CD8-positive, alpha-beta T cell (primary cell): ENCODE measurements at regions of chr2 and their contacts with region 1.

Region 1: DNA sequence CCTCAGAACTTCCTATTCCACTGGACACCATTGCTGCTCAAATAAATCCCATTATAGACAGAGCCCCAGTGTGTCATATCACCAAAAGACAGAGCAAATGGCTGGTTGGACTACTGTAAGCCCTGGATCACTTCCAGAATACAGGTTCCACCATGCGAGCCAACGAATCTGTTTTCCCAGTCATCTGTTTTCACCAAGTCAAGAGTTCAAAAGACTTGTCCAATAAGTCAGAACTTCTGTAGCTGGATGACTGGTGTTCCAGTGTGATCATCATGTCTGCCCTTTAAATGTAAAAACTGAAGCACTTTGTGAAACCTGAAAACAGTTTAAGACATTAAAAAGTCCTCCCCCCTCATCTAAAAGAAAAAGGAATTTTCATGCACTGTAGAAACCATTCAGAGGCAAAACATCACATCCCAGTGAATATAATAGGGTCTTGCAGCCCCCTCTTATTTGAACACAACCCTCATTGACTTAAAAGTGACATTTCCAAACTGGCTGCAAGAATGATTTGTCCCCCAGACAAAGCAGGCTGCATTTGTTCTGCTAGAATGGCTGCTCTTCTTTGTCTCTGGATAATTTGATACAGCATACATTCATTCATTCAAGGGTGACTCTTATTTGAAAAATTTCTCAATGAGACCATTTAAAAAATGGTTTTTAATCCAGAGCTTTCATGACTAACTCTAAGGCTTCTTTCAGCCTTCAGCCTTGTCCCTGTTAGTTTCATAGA is 64.6 kb upstream of the TANC1 start:
- DNase-seq: no peak
- ATAC-seq: no peak
- H3K4me3 ChIP-seq: no peak overlapping the region
- H3K4me3 Mint-ChIP-seq: no peak overlapping the region
- H3K27ac ChIP-seq: no peak overlapping the region
- H3K27ac Mint-ChIP-seq: no peak overlapping the region
- H3K4me1 ChIP-seq: no peaks in the 10 kb centered on the region
- H3K4me1 Mint-ChIP-seq: no peaks in the 10 kb centered on the region
- H3K27me3 ChIP-seq: no peaks in the 10 kb centered on the region
- H3K27me3 Mint-ChIP-seq: no peaks in the 10 kb centered on the region
- CTCF ChIP-seq: no peak

Region 2: DNA sequence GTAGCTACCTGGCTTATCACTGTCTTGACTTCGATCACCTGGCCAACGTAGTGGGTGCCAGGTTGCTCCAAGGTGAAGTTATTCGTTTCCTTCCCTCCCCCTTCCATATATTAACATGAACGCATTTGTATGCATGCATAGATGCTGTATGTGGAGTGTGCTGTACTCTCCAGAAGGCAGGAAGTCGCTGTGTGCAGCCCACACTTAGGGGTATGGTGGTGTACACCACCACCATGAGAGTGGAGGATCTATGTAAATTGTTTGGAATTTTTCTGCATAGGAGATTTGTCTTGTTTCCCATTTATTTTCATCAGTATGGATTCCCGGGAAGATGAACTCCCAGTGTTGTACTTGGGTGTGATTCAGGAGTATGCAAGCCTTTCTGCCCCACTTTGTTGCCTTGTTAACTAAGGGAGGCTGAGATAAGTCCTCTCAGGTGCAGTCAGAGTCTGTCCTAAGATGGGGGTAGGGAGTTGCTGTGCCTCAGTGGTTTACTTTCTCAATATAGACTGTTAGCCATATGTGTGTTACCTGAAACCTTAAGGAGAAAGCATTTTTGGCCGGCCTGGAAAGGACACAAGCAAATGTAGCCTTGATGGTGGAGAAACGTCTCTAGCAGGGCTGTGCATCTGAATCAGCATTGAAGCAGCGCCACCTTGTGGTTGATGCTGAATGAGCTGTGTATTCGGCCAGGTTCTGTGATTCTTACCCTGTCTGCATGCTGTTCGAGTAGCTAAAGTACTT is 214.4 kb after region 1 on chr2:
- CTCF ChIA-PET with region 1: interaction called, 63 read pairs
- POLR2A ChIA-PET with region 1: interaction called, 3 read pairs
- intact Hi-C with region 1: loop called (anchors 1 kb)
- DNase-seq: peak; percentile 54 to 89 (median 79)
- ATAC-seq: peak; percentile 75
- H3K4me3 ChIP-seq: no peak overlapping the region
- H3K4me3 Mint-ChIP-seq: no peak overlapping the region
- H3K27ac ChIP-seq: no peak overlapping the region
- H3K27ac Mint-ChIP-seq: no peak overlapping the region
- H3K4me1 ChIP-seq: no peaks in the 10 kb centered on the region
- H3K4me1 Mint-ChIP-seq: peaks cover 12% of the 10 kb centered on the region
- H3K27me3 ChIP-seq: no peaks in the 10 kb centered on the region
- H3K27me3 Mint-ChIP-seq: no peaks in the 10 kb centered on the region
- CTCF ChIP-seq: peak; percentile 80

Region 3: DNA sequence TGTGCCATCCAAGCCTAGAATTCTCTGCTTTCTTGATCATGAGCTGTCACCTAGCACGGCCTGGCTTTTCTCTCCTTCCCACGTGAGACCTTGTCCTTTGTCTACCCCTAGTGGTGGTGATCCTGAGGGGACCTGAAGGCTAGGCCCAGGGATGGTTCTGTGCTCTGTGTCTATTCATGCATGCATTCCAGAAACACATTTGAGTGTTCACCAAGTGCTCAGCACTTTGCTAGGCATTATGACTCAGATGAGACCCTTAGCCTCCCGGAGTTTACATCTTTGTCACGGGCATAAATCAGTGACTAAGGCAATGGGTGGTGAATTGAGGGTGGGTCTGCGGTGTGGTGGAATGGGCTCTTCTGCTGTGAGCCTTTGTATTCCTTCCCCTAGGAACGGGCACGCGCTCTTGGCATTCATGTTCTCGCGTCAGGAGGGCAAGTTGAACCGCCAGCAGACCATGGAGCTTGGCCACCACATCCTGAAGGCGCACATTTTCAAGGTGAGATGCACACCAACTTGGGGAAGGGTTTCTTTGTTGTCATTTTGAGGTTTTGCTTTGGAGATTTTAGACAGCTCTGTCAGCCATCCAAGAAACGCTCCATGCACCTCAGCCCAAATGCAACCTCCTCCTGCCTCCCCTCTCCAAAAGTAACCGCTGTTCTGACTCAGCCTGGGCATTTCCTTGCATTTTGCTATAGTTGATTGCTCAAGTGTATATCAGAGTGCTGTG is 281.7 kb after region 1 on chr2:
- CTCF ChIA-PET with region 1: interaction called, 4 read pairs
- POLR2A ChIA-PET with region 1: no interaction called
- intact Hi-C with region 1: loop called in 1 of 2 experiments (anchors 1 kb)
- DNase-seq: peak in 2 of 9 experiments; percentile 52 to 61
- ATAC-seq: no peak
- H3K4me3 ChIP-seq: no peak overlapping the region
- H3K4me3 Mint-ChIP-seq: no peak overlapping the region
- H3K27ac ChIP-seq: no peak overlapping the region
- H3K27ac Mint-ChIP-seq: no peak overlapping the region
- H3K4me1 ChIP-seq: peaks cover 7% of the 10 kb centered on the region
- H3K4me1 Mint-ChIP-seq: peaks cover 12% of the 10 kb centered on the region
- H3K27me3 ChIP-seq: no peaks in the 10 kb centered on the region
- H3K27me3 Mint-ChIP-seq: no peaks in the 10 kb centered on the region
- CTCF ChIP-seq: no peak

Region 4: DNA sequence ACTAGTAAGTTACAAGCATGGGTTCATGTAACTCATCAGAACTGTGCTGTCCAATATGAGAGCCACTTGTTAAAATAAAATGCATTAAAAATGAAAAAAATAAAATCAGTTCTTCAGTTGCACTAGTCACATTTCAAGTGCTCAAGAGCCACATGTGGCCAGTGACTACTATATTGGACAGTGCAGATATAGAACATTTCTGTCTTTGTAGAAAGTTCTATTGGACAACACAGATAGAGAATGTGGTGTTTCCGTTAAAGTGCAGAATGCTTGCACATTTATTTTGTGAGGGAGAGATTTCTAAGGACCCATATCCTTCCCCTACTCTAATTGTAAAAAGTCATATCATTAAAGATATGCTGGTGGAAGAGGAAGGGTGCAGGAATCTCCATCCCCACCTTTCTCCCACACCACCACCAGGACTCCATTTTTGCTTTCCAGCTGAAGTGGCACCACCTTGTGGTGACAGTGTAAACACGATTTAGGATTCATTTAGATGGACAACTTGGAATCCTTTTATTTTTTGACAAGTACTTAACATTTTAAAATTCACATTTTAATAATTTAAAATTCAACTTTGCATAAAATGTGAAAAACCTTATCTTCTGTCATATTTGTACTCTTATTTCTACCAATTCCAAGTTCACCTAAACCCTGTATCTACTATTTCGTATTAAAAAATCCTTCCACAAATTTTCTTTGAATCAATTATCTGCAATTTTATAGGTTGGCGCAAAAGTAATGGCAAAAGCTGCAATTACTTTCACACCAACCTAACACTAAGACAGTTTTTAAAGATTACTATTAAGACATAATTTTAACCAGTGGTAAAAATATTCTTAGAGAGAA is 903.5 kb after region 1 on chr2:
- CTCF ChIA-PET with region 1: no interaction called
- POLR2A ChIA-PET with region 1: no interaction called
- intact Hi-C with region 1: loop called (anchors 2 to 5 kb)
- DNase-seq: peak in 3 of 9 experiments; percentile 6 to 46 (median 25)
- ATAC-seq: no peak
- H3K4me3 ChIP-seq: no peak overlapping the region
- H3K4me3 Mint-ChIP-seq: no peak overlapping the region
- H3K27ac ChIP-seq: no peak overlapping the region
- H3K27ac Mint-ChIP-seq: no peak overlapping the region
- H3K4me1 ChIP-seq: no peaks in the 10 kb centered on the region
- H3K4me1 Mint-ChIP-seq: no peaks in the 10 kb centered on the region
- H3K27me3 ChIP-seq: no peaks in the 10 kb centered on the region
- H3K27me3 Mint-ChIP-seq: no peaks in the 10 kb centered on the region
- CTCF ChIP-seq: peak; percentile 27

Region 5: GRCh38 chr2:159921752-159922404 is 1018.0 kb after region 1 on chr2:
- CTCF ChIA-PET with region 1: no interaction called
- POLR2A ChIA-PET with region 1: no interaction called
- intact Hi-C with region 1: loop called in 1 of 2 experiments (anchors 5 kb)
- DNase-seq: peak; percentile 53 to 78 (median 71)
- ATAC-seq: peak; percentile 91
- H3K4me3 ChIP-seq: no peak overlapping the region
- H3K4me3 Mint-ChIP-seq: no peak overlapping the region
- H3K27ac ChIP-seq: no peak overlapping the region
- H3K27ac Mint-ChIP-seq: no peak overlapping the region
- H3K4me1 ChIP-seq: peaks cover 6% of the 10 kb centered on the region
- H3K4me1 Mint-ChIP-seq: no peaks in the 10 kb centered on the region
- H3K27me3 ChIP-seq: peaks cover 0 to 4% of the 10 kb centered on the region in 2 experiments
- H3K27me3 Mint-ChIP-seq: peaks cover 17% of the 10 kb centered on the region
- CTCF ChIP-seq: peak; percentile 75

Region 6: DNA sequence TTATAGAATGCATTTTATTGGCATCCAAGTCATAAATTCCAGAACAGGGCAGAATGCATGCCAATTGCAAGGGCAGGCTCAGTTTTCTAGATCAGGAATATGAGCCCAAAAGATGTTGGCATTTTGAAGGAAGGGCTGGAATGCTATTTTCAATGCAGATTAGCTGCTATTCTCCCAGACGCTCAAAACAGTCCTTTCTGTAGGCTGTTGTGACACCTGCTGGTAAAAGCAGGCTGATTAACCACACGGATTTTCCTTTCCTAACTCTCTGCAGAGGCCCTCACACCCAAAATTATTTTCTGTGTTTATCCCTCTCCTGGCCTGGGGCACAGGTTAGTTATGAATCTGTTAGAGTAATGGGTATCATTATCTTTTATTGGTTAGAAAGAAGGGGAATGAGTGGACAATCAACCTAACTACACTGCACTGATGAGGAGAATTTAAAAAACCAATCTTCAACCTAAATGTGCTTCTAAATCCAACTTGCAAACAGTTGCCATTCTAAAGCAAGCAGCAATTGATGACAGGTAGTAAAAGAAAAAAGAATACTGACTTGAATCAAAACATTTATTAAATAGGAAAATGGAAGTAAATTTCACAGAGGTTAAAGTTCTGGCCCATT is 1064.5 kb after region 1 on chr2:
- CTCF ChIA-PET with region 1: no interaction called
- POLR2A ChIA-PET with region 1: no interaction called
- intact Hi-C with region 1: loop called in 1 of 2 experiments (anchors 5 kb)
- DNase-seq: peak in 2 of 9 experiments; percentile 22 to 33
- ATAC-seq: no peak
- H3K4me3 ChIP-seq: no peak overlapping the region
- H3K4me3 Mint-ChIP-seq: no peak overlapping the region
- H3K27ac ChIP-seq: no peak overlapping the region
- H3K27ac Mint-ChIP-seq: no peak overlapping the region
- H3K4me1 ChIP-seq: no peaks in the 10 kb centered on the region
- H3K4me1 Mint-ChIP-seq: no peaks in the 10 kb centered on the region
- H3K27me3 ChIP-seq: no peaks in the 10 kb centered on the region
- H3K27me3 Mint-ChIP-seq: no peaks in the 10 kb centered on the region
- CTCF ChIP-seq: no peak

Region 7: GRCh38 chr2:160210599-160211138 is 1306.8 kb after region 1 on chr2:
- CTCF ChIA-PET with region 1: interaction called, 4 read pairs
- POLR2A ChIA-PET with region 1: no interaction called
- intact Hi-C with region 1: loop called (anchors 2 kb)
- DNase-seq: peak; percentile 39 to 79 (median 67)
- ATAC-seq: peak; percentile 91
- H3K4me3 ChIP-seq: no peak overlapping the region
- H3K4me3 Mint-ChIP-seq: no peak overlapping the region
- H3K27ac ChIP-seq: no peak overlapping the region
- H3K27ac Mint-ChIP-seq: no peak overlapping the region
- H3K4me1 ChIP-seq: no peaks in the 10 kb centered on the region
- H3K4me1 Mint-ChIP-seq: peaks cover 7% of the 10 kb centered on the region
- H3K27me3 ChIP-seq: no peaks in the 10 kb centered on the region
- H3K27me3 Mint-ChIP-seq: peaks cover 9% of the 10 kb centered on the region
- CTCF ChIP-seq: peak; percentile 85